HepG2 (cell line): ENCODE measurements at regions of chr4 and their contacts with region 1.

Region 1: GRCh38 chr4:41882625-41883347 is 52.4 kb upstream of the TMEM33 start:
- DNase-seq: no peak
- ATAC-seq: no peak
- H3K4me3 ChIP-seq: no peak overlapping the region
- H3K27ac ChIP-seq: no peak overlapping the region
- H3K4me1 ChIP-seq: peaks cover 16% of the 10 kb centered on the region
- H3K27me3 ChIP-seq: peaks cover 0 to 15% of the 10 kb centered on the region in 2 experiments
- CTCF ChIP-seq: no peak
- EP300 ChIP-seq: no peak
- POLR2A ChIP-seq: no peak
- RAD21 ChIP-seq: no peak

Region 2: GRCh38 chr4:41268022-41268421 is 614.8 kb before region 1 on chr4:
- CTCF ChIA-PET with region 1: no interaction called
- POLR2A ChIA-PET with region 1: no interaction called
- in situ Hi-C with region 1: loop called (anchors 10 kb)
- intact Hi-C with region 1: no loop called
- DNase-seq: no peak
- ATAC-seq: no peak
- H3K4me3 ChIP-seq: no peak overlapping the region
- H3K27ac ChIP-seq: no peak overlapping the region
- H3K4me1 ChIP-seq: no peaks in the 10 kb centered on the region
- H3K27me3 ChIP-seq: no peaks in the 10 kb centered on the region
- CTCF ChIP-seq: no peak
- EP300 ChIP-seq: no peak
- POLR2A ChIP-seq: no peak
- RAD21 ChIP-seq: no peak

Region 3: DNA sequence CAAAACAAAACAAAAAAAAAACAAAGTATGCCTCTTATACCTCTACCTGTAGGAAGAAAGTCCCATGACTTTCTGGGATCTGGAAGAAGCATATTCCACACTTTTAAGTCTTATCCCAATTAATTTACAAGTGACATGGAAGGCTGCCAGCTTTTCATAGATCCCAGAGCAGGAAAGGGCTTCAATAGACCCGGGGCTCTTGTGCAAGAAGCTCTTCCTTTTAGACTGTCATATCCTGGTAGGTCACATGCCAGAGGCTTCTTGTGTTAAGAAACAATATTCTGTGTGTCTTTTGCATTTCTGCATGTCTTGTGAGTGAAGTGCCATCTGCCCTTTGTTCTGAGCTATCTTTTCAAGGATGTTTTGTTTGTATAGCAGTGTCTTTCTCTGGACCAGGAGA is 49.8 kb before region 1 on chr4:
- CTCF ChIA-PET with region 1: no interaction called
- POLR2A ChIA-PET with region 1: no interaction called
- in situ Hi-C with region 1: no loop called
- intact Hi-C with region 1: no loop called
- DNase-seq: no peak
- ATAC-seq: no peak
- H3K4me3 ChIP-seq: no peak overlapping the region
- H3K27ac ChIP-seq: no peak overlapping the region
- H3K4me1 ChIP-seq: no peaks in the 10 kb centered on the region
- H3K27me3 ChIP-seq: no peaks in the 10 kb centered on the region; a peak in 1 of 5 replicates
- CTCF ChIP-seq: no peak
- EP300 ChIP-seq: no peak
- POLR2A ChIP-seq: no peak
- RAD21 ChIP-seq: no peak